ENCODE measurements at regions of chr3 and their contacts with region 1.

Region 1: GRCh38 chr3:143119009-143119914 is at the start of gene CHST2:
- DNase-seq: peak; percentile 40 to 86 (median 65)
- ATAC-seq: peak; percentile 73
- H3K4me3 ChIP-seq: peak within 1 kb of the TSS; percentile 93
- H3K4me3 Mint-ChIP-seq: peak within 1 kb of the TSS; percentile 95
- H3K27ac ChIP-seq: peak within 1 kb of the TSS; percentile 15 to 35
- H3K27ac Mint-ChIP-seq: peak within 1 kb of the TSS; percentile 88
- H3K4me1 ChIP-seq: peaks cover 36% of the 10 kb centered on the region
- H3K4me1 Mint-ChIP-seq: peaks cover 44% of the 10 kb centered on the region
- H3K27me3 ChIP-seq: peaks cover 0 to 3% of the 10 kb centered on the region in 2 experiments
- H3K27me3 Mint-ChIP-seq: no peaks in the 10 kb centered on the region
- CTCF ChIP-seq: no peak
- total RNA-seq, gene CHST2: 2.0 TPM

Region 2: GRCh38 chr3:143060906-143061305 is 58.4 kb before region 1 on chr3:
- CTCF ChIA-PET with region 1: no interaction called
- POLR2A ChIA-PET with region 1: no interaction called
- intact Hi-C with region 1: no loop called
- DNase-seq: peak in 1 of 14 experiments; percentile 23
- ATAC-seq: no peak
- H3K4me3 ChIP-seq: no peak overlapping the region
- H3K4me3 Mint-ChIP-seq: no peak overlapping the region
- H3K27ac ChIP-seq: no peak overlapping the region
- H3K27ac Mint-ChIP-seq: peak overlapping the region; percentile 49
- H3K4me1 ChIP-seq: no peaks in the 10 kb centered on the region
- H3K4me1 Mint-ChIP-seq: peaks cover 28% of the 10 kb centered on the region
- H3K27me3 ChIP-seq: no peaks in the 10 kb centered on the region
- H3K27me3 Mint-ChIP-seq: no peaks in the 10 kb centered on the region
- CTCF ChIP-seq: no peak

Region 3: GRCh38 chr3:143171141-143171970 is 52.1 kb after region 1 on chr3:
- CTCF ChIA-PET with region 1: interaction called, 3 read pairs
- POLR2A ChIA-PET with region 1: interaction called, 12 read pairs
- intact Hi-C with region 1: loop called in 1 of 2 experiments (anchors 2 kb)
- DNase-seq: peak in 4 of 14 experiments; percentile 38 to 64 (median 42)
- ATAC-seq: peak; percentile 63
- H3K4me3 ChIP-seq: no peak overlapping the region
- H3K4me3 Mint-ChIP-seq: peak overlapping the region; percentile 71
- H3K27ac ChIP-seq: peak overlapping the region; percentile 46 to 61
- H3K27ac Mint-ChIP-seq: peak overlapping the region; percentile 85
- H3K4me1 ChIP-seq: peaks cover 41% of the 10 kb centered on the region
- H3K4me1 Mint-ChIP-seq: peaks cover 80% of the 10 kb centered on the region
- H3K27me3 ChIP-seq: no peaks in the 10 kb centered on the region
- H3K27me3 Mint-ChIP-seq: no peaks in the 10 kb centered on the region
- CTCF ChIP-seq: no peak

Region 4: DNA sequence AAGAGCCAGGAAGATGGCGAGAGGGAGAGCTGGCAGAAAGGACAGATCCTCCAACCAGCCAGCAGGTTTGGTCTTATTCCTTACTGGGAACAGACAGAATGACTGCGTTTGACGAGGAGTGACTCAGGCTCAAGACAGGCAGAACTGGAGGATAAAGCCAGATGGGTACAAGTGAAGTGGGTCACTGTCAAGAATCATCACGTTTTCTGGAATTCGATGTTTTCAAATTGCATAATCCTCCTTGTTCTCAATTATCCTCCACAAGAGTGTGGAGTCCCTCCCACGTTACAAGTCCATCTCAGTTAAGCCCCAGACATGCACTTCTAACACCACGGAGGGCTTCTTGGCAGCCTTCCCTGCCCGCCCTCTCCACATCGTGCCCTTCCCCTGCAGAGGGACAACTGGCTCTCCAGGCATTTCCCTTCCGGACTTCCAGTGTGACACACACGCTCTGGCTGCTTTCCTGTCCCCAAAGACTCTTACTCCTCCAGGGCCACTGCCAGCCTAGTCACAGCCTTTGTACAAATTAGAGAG is 183.4 kb after region 1 on chr3:
- CTCF ChIA-PET with region 1: no interaction called
- POLR2A ChIA-PET with region 1: no interaction called
- intact Hi-C with region 1: loop called in 1 of 2 experiments (anchors 10 kb)
- DNase-seq: no peak
- ATAC-seq: no peak
- H3K4me3 ChIP-seq: no peak overlapping the region
- H3K4me3 Mint-ChIP-seq: no peak overlapping the region
- H3K27ac ChIP-seq: no peak overlapping the region
- H3K27ac Mint-ChIP-seq: no peak overlapping the region
- H3K4me1 ChIP-seq: no peaks in the 10 kb centered on the region
- H3K4me1 Mint-ChIP-seq: peaks cover 30% of the 10 kb centered on the region
- H3K27me3 ChIP-seq: no peaks in the 10 kb centered on the region
- H3K27me3 Mint-ChIP-seq: no peaks in the 10 kb centered on the region
- CTCF ChIP-seq: no peak

Region 5: DNA sequence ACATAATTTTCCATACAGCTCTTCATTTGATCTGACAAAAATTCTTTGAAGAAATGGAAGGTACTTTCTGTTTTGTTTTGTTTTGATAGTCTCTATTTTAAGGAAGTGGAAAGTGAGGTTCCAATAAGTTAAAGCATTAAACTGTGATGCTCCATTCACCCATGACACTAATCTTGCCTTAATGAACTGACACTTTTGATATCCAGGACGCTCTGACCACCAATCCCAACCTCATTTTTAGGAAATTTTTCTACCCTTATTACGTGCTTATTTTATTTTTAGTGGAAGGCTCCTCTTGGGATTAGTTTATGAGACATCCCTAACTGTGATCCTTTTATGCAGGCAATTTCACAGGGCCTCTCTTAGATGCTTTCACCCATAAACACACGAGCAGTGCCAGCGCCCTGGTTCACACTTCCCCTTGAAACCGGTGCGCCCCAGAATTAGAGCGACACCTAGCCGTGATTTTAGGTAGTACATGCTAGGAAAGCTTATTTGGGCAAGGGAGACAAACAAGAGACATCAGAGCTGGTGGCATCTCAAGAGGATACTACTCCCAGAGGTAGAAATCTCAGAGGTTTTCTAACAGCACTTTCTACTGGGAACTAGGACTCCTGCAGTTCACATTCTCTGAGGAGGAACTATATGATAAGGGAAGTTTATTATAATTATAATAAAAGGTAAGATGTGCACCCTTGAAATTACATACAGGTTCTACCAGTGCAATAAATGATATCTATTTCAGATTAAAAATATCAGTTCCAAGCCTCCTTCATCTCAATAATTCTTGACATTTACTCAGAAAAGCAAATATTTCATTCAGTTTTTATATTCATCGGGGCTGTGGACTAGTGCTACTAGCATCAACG is 555.1 kb after region 1 on chr3:
- CTCF ChIA-PET with region 1: interaction called, 4 read pairs
- POLR2A ChIA-PET with region 1: interaction called, 10 read pairs
- intact Hi-C with region 1: loop called (anchors 2 to 5 kb)
- DNase-seq: peak; percentile 38 to 85 (median 66)
- ATAC-seq: peak; percentile 97
- H3K4me3 ChIP-seq: no peak overlapping the region
- H3K4me3 Mint-ChIP-seq: peak overlapping the region; percentile 0
- H3K27ac ChIP-seq: no peak overlapping the region
- H3K27ac Mint-ChIP-seq: no peak overlapping the region
- H3K4me1 ChIP-seq: peaks cover 3% of the 10 kb centered on the region
- H3K4me1 Mint-ChIP-seq: peaks cover 6% of the 10 kb centered on the region
- H3K27me3 ChIP-seq: no peaks in the 10 kb centered on the region
- H3K27me3 Mint-ChIP-seq: no peaks in the 10 kb centered on the region
- CTCF ChIP-seq: peak; percentile 95

Region 6: GRCh38 chr3:143972505-143973255 is 853.4 kb after region 1 on chr3:
- CTCF ChIA-PET with region 1: no interaction called
- POLR2A ChIA-PET with region 1: no interaction called
- intact Hi-C with region 1: loop called in 1 of 2 experiments (anchors 10 kb)
- DNase-seq: peak in 13 of 14 experiments; percentile 22 to 90 (median 53)
- ATAC-seq: no peak
- H3K4me3 ChIP-seq: peak overlapping the region; percentile 90
- H3K4me3 Mint-ChIP-seq: peak overlapping the region; percentile 97
- H3K27ac ChIP-seq: peak overlapping the region; percentile 76 to 79
- H3K27ac Mint-ChIP-seq: peak overlapping the region; percentile 91
- H3K4me1 ChIP-seq: peaks cover 11% of the 10 kb centered on the region
- H3K4me1 Mint-ChIP-seq: peaks cover 52% of the 10 kb centered on the region
- H3K27me3 ChIP-seq: peaks cover 0 to 3% of the 10 kb centered on the region in 2 experiments
- H3K27me3 Mint-ChIP-seq: no peaks in the 10 kb centered on the region
- CTCF ChIP-seq: peak; percentile 63